Posterior vena cava (tissue), 2 donors: ENCODE measurements at regions of chr5 and their contacts with region 1.

Region 1: GRCh38 chr5:93145767-93146166 is 435.3 kb downstream of the NR2F1-AS1 start:
- DNase-seq: no peak

Region 2: DNA sequence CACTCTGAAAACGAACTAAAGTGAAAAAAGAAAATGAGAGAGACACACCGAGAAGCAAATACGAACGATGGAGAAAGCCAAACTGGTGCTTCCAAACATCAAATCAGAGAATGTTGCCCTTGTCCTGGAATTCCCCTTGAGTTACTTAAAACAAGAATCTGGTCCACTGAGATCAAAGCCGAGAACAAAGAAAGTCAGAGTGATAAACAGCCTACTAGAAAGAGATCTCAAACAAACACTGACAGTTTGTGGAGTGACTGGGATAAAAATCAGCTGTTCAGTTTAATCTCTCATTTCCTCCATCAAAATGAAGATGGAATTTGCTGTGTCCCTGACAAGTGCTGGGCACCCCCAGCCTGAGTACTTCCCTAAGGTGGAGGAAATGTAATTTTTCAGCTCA is 147.3 kb before region 1 on chr5:
- intact Hi-C with region 1: loop called in 1 of 2 experiments (anchors 5 kb)
- DNase-seq: no peak